ENCODE measurements at regions of chr1 and their contacts with region 1.

Region 1: GRCh38 chr1:150578965-150579798 is at the start of gene MCL1:
- DNase-seq: peak; percentile 94 to 95
- ATAC-seq: peak; percentile 68 to 71
- H3K4me3 ChIP-seq: peak within 1 kb of the TSS; percentile 67 to 98 (median 84)
- H3K27ac ChIP-seq: peak within 1 kb of the TSS; percentile 100
- H3K4me1 ChIP-seq: peaks cover 21 to 25% of the 10 kb centered on the region in 2 donors
- H3K27me3 ChIP-seq: no peaks in the 10 kb centered on the region
- CTCF ChIP-seq: peak in 2 of 5 experiments; percentile 27 to 32
- POLR2A ChIP-seq: peak; percentile 98 to 99
- total RNA-seq, gene MCL1: 136 to 199 (median 176) TPM

Region 2: DNA sequence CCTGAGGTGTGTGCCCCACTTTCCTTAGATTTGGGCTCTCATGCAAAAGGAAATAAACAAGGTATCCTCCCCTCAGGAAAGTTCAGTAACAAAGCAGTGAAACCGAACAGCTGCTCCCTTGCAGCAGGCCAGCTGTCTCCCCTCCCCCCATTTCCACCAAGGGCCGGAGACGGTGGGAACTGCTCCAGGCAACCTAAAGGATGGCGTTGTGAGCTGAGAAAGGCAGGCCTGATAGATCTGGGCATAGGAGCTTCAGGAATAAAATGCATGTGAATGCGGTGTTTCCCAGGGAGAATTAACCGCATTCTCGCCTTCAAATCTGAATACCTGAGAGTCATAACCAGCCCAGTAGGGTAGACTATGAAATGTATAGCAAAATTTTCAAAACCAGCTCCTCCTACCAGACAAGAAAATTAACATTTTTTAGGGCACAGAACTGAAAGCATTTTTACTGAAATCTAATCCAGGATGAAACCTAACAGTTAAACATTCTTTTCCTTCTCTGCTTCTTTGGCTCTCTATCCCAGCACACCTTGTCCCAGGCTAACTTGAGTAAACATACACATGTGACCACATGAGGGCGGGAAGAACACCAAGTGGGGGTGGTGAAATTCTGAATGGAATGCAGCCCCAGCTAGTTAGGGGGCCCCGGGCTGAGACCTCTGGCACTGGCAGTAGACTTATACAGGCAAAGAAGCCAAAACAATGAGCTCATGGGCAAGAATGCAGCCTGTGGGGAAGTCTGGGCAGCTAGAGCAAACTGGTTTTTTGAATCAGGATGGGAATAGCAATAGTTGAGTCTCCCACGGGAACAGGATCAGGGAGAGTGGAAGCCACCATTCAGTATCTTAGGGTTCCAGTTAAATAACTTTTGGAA is 11.2 kb before region 1 on chr1:
- in situ Hi-C with region 1: no loop called
- intact Hi-C with region 1: loop called (anchors 1 kb)
- DNase-seq: peak; percentile 89 to 95
- ATAC-seq: peak; percentile 86 to 90
- H3K4me3 ChIP-seq: peak overlapping the region; percentile 48 to 54 (median 52)
- H3K27ac ChIP-seq: peak overlapping the region; percentile 100
- H3K4me1 ChIP-seq: peaks cover 97 to 99% of the 10 kb centered on the region in 2 donors
- H3K27me3 ChIP-seq: no peaks in the 10 kb centered on the region
- CTCF ChIP-seq: no peak
- POLR2A ChIP-seq: peak; percentile 13 to 51

Region 3: DNA sequence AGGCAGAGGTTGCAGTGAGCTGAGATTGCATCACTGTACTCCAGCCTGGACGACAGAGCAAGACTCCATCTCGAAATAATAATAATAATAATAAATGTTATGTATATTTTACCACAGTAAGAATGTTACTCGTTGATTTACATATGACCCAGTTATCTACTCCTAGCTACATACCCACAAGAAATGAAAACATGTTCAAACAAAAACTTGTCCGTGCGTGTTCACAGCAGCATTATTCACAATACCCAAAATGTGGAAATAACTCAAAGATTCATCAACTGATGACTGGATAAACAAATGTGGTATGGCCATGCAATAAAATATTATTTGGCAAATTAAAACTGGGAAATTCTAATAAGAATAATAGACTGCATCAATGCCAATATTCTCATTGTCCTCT is 82.0 kb after region 1 on chr1:
- in situ Hi-C with region 1: no loop called
- intact Hi-C with region 1: no loop called
- DNase-seq: no peak
- ATAC-seq: no peak
- H3K4me3 ChIP-seq: no peak overlapping the region
- H3K27ac ChIP-seq: no peak overlapping the region
- H3K4me1 ChIP-seq: no peaks in the 10 kb centered on the region
- H3K27me3 ChIP-seq: no peaks in the 10 kb centered on the region
- CTCF ChIP-seq: no peak
- POLR2A ChIP-seq: no peak

Region 4: GRCh38 chr1:151693076-151693651 is 1114.0 kb after region 1 on chr1:
- in situ Hi-C with region 1: no loop called
- intact Hi-C with region 1: no loop called
- DNase-seq: no peak
- ATAC-seq: no peak
- H3K4me3 ChIP-seq: no peak overlapping the region
- H3K27ac ChIP-seq: no peak overlapping the region
- H3K4me1 ChIP-seq: no peaks in the 10 kb centered on the region
- H3K27me3 ChIP-seq: no peaks in the 10 kb centered on the region
- CTCF ChIP-seq: peak in 1 of 5 experiments; percentile 6
- POLR2A ChIP-seq: no peak